Heart right ventricle (tissue), 16 donors: ENCODE measurements at regions of chr15 and their contacts with region 1.

Region 1: DNA sequence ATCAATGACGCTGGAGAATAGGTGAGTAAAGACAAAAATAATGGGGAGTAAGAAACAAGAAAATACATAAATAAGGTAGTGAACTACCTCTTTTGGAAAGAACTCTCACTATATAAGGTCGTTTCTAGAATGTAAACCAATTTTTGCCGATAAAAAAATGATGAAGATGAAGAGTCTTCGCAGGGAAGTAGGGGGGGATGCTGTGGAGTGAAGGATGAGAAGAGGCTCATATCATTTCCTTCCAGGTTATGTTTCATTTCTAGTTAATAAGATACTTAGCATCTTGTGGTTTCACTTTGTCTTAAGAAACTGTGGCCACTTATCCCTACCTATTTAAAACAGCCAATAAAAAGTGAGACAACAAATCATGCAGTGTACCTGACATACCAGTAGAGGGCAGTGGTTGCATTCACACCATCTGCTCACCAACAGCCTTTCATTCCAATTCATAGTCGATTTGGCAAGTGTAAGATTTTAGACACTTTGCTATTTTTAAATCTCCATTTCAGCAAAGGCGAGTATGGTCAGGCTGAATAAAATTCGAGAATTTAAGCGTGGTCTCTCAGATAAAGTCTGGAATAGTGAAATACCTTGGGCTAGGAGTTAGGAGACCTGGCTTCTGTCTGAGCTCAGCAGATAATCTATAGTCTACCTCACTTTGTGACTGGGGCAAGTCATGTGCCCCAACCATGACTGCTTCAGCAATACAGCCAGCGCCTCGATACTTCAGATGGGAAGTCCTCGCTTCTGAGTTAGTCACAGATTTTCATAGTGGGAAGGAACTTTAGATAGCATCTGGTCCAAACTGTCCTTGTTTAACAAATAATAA is 28.9 kb upstream of the ICE2 start:
- DNase-seq: peak in 1 of 2 donors; percentile 50
- ATAC-seq: peak in 7 of 8 donors; percentile 55 to 83 (median 72)
- H3K4me3 ChIP-seq: no peak overlapping the region
- H3K27ac ChIP-seq: peak overlapping the region in 2 of 10 donors; percentile 12 to 28
- H3K4me1 ChIP-seq: peaks cover 10 to 46% (median 25%) of the 10 kb centered on the region in 9 donors
- H3K27me3 ChIP-seq: no peaks in the 10 kb centered on the region
- CTCF ChIP-seq: peak; percentile 85 to 97 (median 90)

Region 2: GRCh38 chr15:60573936-60574335 is 66.1 kb after region 1 on chr15:
- intact Hi-C with region 1: loop called in 1 of 10 experiments (anchors 10 kb)
- DNase-seq: no peak
- ATAC-seq: no peak
- H3K4me3 ChIP-seq: no peak overlapping the region
- H3K27ac ChIP-seq: no peak overlapping the region
- H3K4me1 ChIP-seq: peaks cover 0 to 49% (median 20%) of the 10 kb centered on the region in 9 donors
- H3K27me3 ChIP-seq: no peaks in the 10 kb centered on the region
- CTCF ChIP-seq: no peak